Adrenal gland (tissue), 19 donors: ENCODE measurements at regions of chr10 and their contacts with region 1.

Region 1: GRCh38 chr10:77846718-77847630 is 79.6 kb downstream of the DLG5 start:
- DNase-seq: peak; percentile 84 to 90 (median 87)
- H3K4me3 ChIP-seq: no peak overlapping the region
- H3K27ac ChIP-seq: peak overlapping the region; percentile 49 to 93 (median 82)
- H3K4me1 ChIP-seq: peaks cover 22 to 54% of the 10 kb centered on the region in 2 donors
- H3K27me3 ChIP-seq: no peaks in the 10 kb centered on the region
- CTCF ChIP-seq: peak; percentile 95 to 98 (median 97)
- POLR2A ChIP-seq: peak in 1 of 2 donors; percentile 12

Region 2: DNA sequence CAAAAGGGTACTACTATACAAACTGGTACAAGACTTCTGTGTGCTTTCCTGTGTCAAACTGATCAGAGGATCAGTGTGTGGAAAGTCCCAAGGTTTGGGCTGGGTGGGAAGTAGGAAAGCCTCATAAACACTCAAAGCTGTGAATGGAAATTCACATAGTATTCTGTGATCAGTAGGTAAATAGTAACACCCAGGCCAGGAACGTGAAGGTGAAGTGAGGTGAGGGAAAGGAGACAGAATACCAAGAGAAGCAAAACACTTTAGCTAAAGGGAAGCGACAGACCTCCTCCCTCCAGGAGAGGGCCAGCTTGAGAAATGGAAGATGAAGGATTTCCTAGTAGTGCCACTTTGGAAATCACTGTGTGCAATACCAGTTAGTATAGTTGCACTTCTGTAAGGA is 661.3 kb before region 1 on chr10:
- intact Hi-C with region 1: no loop called
- DNase-seq: no peak
- H3K4me3 ChIP-seq: no peak overlapping the region
- H3K27ac ChIP-seq: no peak overlapping the region
- H3K4me1 ChIP-seq: no peaks in the 10 kb centered on the region
- H3K27me3 ChIP-seq: no peaks in the 10 kb centered on the region
- CTCF ChIP-seq: no peak
- POLR2A ChIP-seq: no peak

Region 3: GRCh38 chr10:77919708-77920099 is 72.7 kb after region 1 on chr10:
- intact Hi-C with region 1: loop called (anchors 5 to 10 kb)
- DNase-seq: no peak
- H3K4me3 ChIP-seq: no peak overlapping the region
- H3K27ac ChIP-seq: peak overlapping the region in 4 of 5 donors; percentile 31 to 87 (median 74)
- H3K4me1 ChIP-seq: peaks cover 49 to 66% of the 10 kb centered on the region in 2 donors
- H3K27me3 ChIP-seq: no peaks in the 10 kb centered on the region
- CTCF ChIP-seq: no peak
- POLR2A ChIP-seq: no peak

Region 4: DNA sequence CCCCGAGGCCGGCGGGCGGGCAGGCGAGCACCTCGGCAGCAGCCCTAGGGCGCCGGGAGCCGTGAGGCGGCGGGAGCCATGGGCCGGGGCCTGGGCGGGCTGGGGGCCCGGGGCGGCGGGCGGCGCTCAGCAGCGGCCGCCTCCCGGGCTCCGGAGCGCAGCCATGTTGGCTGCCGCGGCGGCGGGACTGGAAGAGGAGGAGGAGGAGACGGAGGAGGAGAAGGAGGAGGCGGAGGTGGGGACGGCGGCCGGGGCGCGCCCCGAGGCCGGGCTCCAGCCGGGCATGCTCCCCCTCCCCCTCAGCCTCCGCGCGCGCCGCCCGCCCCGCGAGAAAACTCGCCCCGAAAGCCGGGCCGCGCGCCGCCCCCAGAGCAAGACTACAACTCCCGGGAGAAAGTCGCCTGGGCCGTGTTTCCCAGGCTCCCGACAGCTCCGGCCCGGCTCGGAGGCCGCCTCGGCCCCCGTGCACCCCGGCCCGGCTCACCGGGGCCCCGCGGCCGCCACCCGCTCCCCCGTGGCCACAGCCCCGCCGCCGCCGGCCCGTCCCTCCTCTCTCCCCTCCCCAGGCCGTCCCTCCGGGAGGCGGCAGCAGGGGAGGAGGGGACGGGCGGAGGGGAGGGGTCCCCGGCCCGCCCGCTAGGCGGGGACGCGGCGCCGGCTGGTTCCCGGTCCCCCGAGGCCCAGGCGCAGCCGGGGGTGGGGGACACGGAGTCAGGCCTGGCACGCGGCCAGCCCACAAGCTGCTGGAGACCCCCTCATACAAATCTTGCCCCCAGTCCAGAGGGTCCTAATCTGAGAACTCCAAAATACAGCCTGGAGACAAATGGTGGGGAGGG is 79.8 kb after region 1 on chr10 and contains the start of gene DLG5:
- intact Hi-C with region 1: loop called (anchors 5 to 10 kb)
- DNase-seq: peak; percentile 74 to 85 (median 77)
- H3K4me3 ChIP-seq: peak within 1 kb of the TSS; percentile 35 to 96 (median 82)
- H3K27ac ChIP-seq: peak within 1 kb of the TSS; percentile 41 to 90 (median 83)
- H3K4me1 ChIP-seq: peaks cover 34 to 40% of the 10 kb centered on the region in 2 donors
- H3K27me3 ChIP-seq: no peaks in the 10 kb centered on the region
- CTCF ChIP-seq: peak in 1 of 6 experiments; percentile 13
- POLR2A ChIP-seq: peak; percentile 10 to 71
- total RNA-seq, gene DLG5: 32.6 to 175 (median 125) TPM

Region 5: GRCh38 chr10:78004215-78005026 is 157.4 kb after region 1 on chr10:
- intact Hi-C with region 1: loop called in 1 of 2 experiments (anchors 10 kb)
- DNase-seq: peak; percentile 54 to 87 (median 82)
- H3K4me3 ChIP-seq: no peak overlapping the region
- H3K27ac ChIP-seq: peak overlapping the region in 4 of 5 donors; percentile 26 to 74 (median 53)
- H3K4me1 ChIP-seq: no peaks in the 10 kb centered on the region
- H3K27me3 ChIP-seq: no peaks in the 10 kb centered on the region
- CTCF ChIP-seq: peak in 3 of 6 experiments; percentile 18 to 32 (median 20)
- POLR2A ChIP-seq: no peak